Cardiac septum (tissue), 1 donor: ENCODE measurements at regions of chr21 and their contacts with region 1.

Region 1: DNA sequence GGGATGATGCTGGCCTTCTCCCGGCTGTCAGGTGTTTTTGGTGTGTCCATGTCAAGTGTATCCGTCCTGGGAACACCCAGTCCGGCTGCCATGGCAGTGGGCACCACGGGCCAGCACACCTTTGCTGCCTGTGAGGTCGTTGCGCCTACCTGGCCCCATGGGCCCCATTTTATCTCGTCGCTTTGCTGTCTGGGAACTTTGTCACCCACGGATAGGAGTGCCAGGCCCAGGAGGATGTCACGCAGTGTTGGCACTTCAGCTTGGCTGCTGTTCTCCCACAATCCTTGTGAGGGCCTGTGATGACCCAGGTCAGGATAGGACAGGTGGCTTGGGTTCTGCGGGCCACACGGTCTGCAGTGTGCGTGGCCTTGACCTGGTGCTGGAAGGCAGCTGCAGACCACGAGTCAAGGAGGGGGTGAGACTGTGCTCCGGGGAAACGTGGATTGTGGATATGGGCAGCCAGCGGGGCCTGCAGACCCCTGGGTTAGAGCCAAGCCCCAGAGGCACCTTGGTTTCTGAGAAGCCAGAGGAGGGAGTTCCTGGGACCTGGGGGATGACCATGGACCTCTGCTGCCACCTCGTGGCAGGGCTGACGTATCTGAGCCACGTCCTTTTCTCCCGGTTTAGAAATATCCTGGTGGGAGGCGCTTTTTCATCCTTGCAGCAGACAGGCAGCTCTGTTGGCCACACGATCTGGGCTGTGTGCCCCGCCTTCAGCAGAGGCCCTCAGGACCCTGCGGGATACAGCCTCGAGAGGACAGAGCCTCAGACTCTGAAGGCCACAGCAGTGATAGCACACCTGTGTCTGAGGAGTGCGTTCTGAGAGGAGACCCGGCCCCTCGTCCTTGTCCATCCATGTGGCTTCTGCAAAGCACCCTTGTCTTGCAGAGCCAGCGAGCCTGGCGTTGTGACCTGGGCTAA is 161.1 kb upstream of the COL6A1 start:
- DNase-seq: peak; percentile 86

Region 2: GRCh38 chr21:45874716-45875415 is 54.4 kb after region 1 on chr21:
- intact Hi-C with region 1: no loop called
- DNase-seq: peak; percentile 59

Region 3: DNA sequence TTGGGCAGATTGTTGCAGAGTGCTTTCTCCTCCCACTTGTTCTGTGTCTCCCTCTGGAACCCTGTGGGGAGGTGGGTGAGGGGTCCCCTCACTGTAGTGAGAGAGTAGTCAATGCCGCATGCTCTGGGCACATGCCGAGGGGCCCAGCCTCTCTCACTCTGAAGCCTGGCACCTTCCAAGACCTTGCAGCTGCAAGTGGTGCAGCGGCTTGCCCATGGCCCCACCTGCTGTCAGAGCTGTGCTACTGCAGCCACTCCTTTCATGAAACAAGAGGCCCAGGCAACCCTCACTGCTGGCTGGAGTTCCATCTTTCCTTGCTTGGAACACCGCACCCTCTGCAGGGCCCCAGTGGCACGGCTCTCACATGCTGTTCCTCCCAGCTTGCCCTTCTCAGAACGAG is 102.7 kb after region 1 on chr21:
- intact Hi-C with region 1: loop called (anchors 5 kb)
- DNase-seq: no peak